ENCODE measurements at regions of chr5 and their contacts with region 1.

Region 1: GRCh38 chr5:141564216-141564692 is 54.5 kb downstream of the DIAPH1 start:
- DNase-seq: peak; percentile 97
- ATAC-seq: peak; percentile 71
- H3K4me3 ChIP-seq: no peak overlapping the region
- H3K27ac ChIP-seq: no peak overlapping the region
- H3K4me1 ChIP-seq: peaks cover 4% of the 10 kb centered on the region; the same call in 1 of the 2 replicates
- H3K27me3 ChIP-seq: no peaks in the 10 kb centered on the region
- CTCF ChIP-seq: peak; percentile 99
- POLR2A ChIP-seq: no peak
- RAD21 ChIP-seq: peak; percentile 75

Region 2: GRCh38 chr5:141172378-141173204 is 391.7 kb before region 1 on chr5 and contains the start of gene PCDHB7:
- CTCF ChIA-PET with region 1: no interaction called
- POLR2A ChIA-PET with region 1: no interaction called
- dilution Hi-C with region 1: no loop called
- in situ Hi-C with region 1: no loop called
- intact Hi-C with region 1: loop called (anchors 1 kb)
- DNase-seq: peak; percentile 26
- ATAC-seq: peak; percentile 62
- H3K4me3 ChIP-seq: peak within 1 kb of the TSS; percentile 43
- H3K27ac ChIP-seq: no peak within 1 kb of the TSS
- H3K4me1 ChIP-seq: no peaks in the 10 kb centered on the region
- H3K27me3 ChIP-seq: no peaks in the 10 kb centered on the region
- CTCF ChIP-seq: peak; percentile 50
- POLR2A ChIP-seq: no peak
- RAD21 ChIP-seq: peak; percentile 42; the same call in 1 of the 2 replicates
- total RNA-seq, gene PCDHB7: 0.18 and 0.28 TPM in 2 replicates

Region 3: GRCh38 chr5:141199359-141200235 is 364.7 kb before region 1 on chr5 and contains the start of gene PCDHB11:
- CTCF ChIA-PET with region 1: no interaction called
- POLR2A ChIA-PET with region 1: no interaction called
- dilution Hi-C with region 1: no loop called
- in situ Hi-C with region 1: no loop called
- intact Hi-C with region 1: no loop called
- DNase-seq: no peak
- ATAC-seq: no peak
- H3K4me3 ChIP-seq: peak within 1 kb of the TSS; percentile 25; the same call in 1 of the 2 replicates
- H3K27ac ChIP-seq: no peak within 1 kb of the TSS
- H3K4me1 ChIP-seq: no peaks in the 10 kb centered on the region
- H3K27me3 ChIP-seq: no peaks in the 10 kb centered on the region
- CTCF ChIP-seq: no peak
- POLR2A ChIP-seq: no peak
- RAD21 ChIP-seq: no peak
- total RNA-seq, gene PCDHB11: under 0.01 TPM in 2 replicates

Region 4: GRCh38 chr5:141234109-141234667 is 330.1 kb before region 1 on chr5:
- CTCF ChIA-PET with region 1: interaction called, 3 read pairs
- POLR2A ChIA-PET with region 1: no interaction called
- dilution Hi-C with region 1: no loop called
- in situ Hi-C with region 1: loop called (anchors 10 kb)
- intact Hi-C with region 1: no loop called
- DNase-seq: peak; percentile 3
- ATAC-seq: no peak
- H3K4me3 ChIP-seq: peak overlapping the region; percentile 53
- H3K27ac ChIP-seq: no peak overlapping the region
- H3K4me1 ChIP-seq: no peaks in the 10 kb centered on the region
- H3K27me3 ChIP-seq: no peaks in the 10 kb centered on the region
- CTCF ChIP-seq: peak; percentile 36; the same call in 1 of the 2 replicates
- POLR2A ChIP-seq: no peak
- RAD21 ChIP-seq: peak; percentile 25; the same call in 1 of the 2 replicates

Region 5: DNA sequence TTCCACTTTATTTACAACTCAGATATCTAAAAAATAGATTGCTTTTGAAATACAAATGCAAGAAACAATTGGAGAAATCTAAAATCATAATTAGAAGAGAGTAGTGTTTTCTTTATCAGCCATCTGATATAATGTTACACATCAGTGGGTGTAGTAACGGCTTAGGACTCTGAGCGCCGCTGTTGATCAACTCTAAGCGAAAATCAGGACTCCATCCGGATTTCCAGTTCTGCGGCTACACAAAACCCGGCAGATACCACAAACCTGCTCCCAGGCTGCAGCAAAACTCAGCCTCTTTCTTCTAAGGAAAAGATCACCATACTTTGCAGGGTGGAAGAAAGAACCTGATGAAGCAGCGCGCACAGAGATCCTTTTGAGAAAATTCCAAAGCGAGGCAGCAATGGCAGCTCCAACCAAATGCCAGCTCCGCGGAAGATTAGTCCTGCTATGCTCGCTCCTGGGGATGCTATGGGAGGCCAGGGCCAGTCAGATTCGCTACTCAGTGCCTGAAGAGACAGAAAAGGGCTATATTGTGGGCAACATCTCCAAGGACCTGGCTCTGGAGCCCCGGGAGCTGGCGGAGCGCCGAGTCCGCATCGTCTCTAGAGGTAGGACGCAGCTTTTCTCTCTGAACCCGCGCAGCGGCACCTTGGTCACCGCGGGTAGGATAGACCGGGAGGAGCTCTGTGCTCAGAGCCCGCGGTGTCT is 161.5 kb before region 1 on chr5 and contains the start of gene PCDHGA9:
- CTCF ChIA-PET with region 1: interaction called, 11 read pairs
- POLR2A ChIA-PET with region 1: interaction called, 4 read pairs
- dilution Hi-C with region 1: no loop called
- in situ Hi-C with region 1: no loop called
- intact Hi-C with region 1: no loop called
- DNase-seq: peak; percentile 40
- ATAC-seq: no peak
- H3K4me3 ChIP-seq: peak within 1 kb of the TSS; percentile 24
- H3K27ac ChIP-seq: no peak within 1 kb of the TSS
- H3K4me1 ChIP-seq: no peaks in the 10 kb centered on the region
- H3K27me3 ChIP-seq: no peaks in the 10 kb centered on the region
- CTCF ChIP-seq: peak; percentile 43
- POLR2A ChIP-seq: no peak
- RAD21 ChIP-seq: peak; percentile 36
- total RNA-seq, gene PCDHGA9: 3.9 and 4.5 TPM in 2 replicates

Region 6: DNA sequence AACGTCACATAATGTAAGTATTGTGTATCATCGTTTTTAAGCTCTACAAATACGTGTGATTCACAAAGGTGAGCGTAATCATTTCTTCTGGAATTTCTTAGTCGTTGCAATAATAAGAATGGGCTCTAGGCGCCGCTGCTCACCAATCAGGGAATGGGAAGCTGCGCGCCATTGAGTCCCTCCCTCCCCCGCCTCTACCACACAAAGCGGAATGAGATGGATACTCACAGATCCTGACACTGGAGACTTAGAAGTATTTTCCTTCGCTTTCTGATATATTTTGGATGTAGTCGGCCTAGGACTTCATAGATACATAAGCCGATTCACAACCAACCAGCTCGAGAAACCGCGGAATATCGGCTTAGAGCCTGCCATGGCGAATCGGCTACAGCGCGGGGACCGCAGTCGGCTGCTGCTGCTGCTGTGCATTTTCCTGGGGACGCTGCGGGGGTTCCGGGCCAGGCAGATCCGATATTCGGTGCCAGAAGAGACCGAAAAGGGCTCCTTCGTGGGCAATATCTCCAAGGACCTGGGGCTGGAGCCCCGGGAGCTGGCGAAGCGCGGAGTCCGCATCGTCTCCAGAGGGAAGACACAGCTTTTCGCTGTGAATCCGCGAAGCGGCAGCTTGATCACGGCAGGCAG is 143.3 kb before region 1 on chr5 and contains the start of gene PCDHGA11:
- CTCF ChIA-PET with region 1: interaction called, 34 read pairs
- POLR2A ChIA-PET with region 1: no interaction called
- dilution Hi-C with region 1: no loop called
- in situ Hi-C with region 1: loop called (anchors 5 kb)
- intact Hi-C with region 1: loop called (anchors 1 kb)
- DNase-seq: peak; percentile 63
- ATAC-seq: peak; percentile 57
- H3K4me3 ChIP-seq: peak within 1 kb of the TSS; percentile 54
- H3K27ac ChIP-seq: peak within 1 kb of the TSS; percentile 26; the same call in 1 of the 2 replicates
- H3K4me1 ChIP-seq: no peaks in the 10 kb centered on the region
- H3K27me3 ChIP-seq: no peaks in the 10 kb centered on the region
- CTCF ChIP-seq: peak; percentile 64
- POLR2A ChIP-seq: no peak
- RAD21 ChIP-seq: peak; percentile 70
- total RNA-seq, gene PCDHGA11: 5.4 and 5.8 TPM in 2 replicates

Region 7: DNA sequence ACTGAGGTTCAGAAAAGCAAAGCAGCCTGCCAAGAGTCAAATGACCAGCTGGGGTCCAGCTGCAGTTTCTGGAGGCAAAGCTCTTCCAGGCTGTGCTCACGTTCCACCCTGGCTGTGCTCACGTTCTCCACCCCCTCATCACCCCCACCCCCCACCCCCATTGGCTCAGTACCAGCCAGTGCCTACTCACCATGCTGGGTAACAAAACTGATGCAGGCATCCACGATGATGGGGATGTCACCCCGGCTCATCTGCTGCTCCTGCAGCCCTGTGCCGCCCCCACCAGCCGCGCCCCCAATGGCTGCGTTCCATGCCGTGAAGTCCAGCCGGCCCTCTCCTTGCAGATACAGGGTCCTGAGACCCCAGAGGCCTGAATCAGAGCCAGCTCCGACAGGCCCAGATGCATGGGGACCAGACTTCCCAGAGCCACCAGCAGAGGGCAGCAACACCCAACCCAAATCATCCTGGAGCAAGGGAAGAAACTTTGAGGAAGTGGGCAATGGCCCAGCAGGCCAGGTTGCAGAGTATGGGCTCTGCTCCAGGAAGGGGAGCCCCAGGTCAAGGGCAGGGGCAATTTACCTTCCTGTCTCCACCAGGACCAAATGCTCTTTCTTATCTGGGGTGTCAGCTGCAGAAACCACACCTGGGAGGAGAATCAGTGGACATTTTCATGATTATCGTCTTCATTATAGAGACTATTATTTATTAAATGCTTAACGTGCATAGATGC is 100.6 kb after region 1 on chr5:
- CTCF ChIA-PET with region 1: no interaction called
- POLR2A ChIA-PET with region 1: no interaction called
- dilution Hi-C with region 1: no loop called
- in situ Hi-C with region 1: no loop called
- intact Hi-C with region 1: no loop called
- DNase-seq: peak; percentile 58
- ATAC-seq: peak; percentile 93
- H3K4me3 ChIP-seq: no peak overlapping the region
- H3K27ac ChIP-seq: no peak overlapping the region
- H3K4me1 ChIP-seq: no peaks in the 10 kb centered on the region
- H3K27me3 ChIP-seq: no peaks in the 10 kb centered on the region
- CTCF ChIP-seq: peak; percentile 88
- POLR2A ChIP-seq: no peak
- RAD21 ChIP-seq: peak; percentile 83

Region 8: DNA sequence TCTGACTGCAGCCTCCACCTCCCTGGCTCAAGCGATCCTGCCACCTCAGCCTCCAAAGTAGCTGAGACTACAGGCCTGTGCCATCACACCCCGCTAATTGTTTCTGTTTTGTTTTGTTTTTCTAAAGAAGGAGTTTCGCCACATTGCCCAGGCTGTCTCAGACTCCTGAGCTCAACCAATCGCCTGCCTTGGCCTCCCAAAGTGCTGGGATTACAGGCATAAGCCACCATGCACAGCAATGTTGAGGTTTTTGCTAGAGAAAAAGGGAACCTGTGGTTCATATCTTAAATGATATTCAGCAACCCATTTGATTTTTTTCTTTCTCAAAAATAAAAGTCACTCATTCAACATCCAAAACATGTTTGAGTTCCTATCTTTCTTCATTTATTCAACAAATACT is 339.0 kb after region 1 on chr5:
- CTCF ChIA-PET with region 1: no interaction called
- POLR2A ChIA-PET with region 1: no interaction called
- dilution Hi-C with region 1: no loop called
- in situ Hi-C with region 1: no loop called
- intact Hi-C with region 1: no loop called
- DNase-seq: no peak
- ATAC-seq: no peak
- H3K4me3 ChIP-seq: no peak overlapping the region
- H3K27ac ChIP-seq: no peak overlapping the region
- H3K4me1 ChIP-seq: no peaks in the 10 kb centered on the region
- H3K27me3 ChIP-seq: peaks cover 29% of the 10 kb centered on the region
- CTCF ChIP-seq: no peak
- POLR2A ChIP-seq: no peak
- RAD21 ChIP-seq: no peak

Region 9: DNA sequence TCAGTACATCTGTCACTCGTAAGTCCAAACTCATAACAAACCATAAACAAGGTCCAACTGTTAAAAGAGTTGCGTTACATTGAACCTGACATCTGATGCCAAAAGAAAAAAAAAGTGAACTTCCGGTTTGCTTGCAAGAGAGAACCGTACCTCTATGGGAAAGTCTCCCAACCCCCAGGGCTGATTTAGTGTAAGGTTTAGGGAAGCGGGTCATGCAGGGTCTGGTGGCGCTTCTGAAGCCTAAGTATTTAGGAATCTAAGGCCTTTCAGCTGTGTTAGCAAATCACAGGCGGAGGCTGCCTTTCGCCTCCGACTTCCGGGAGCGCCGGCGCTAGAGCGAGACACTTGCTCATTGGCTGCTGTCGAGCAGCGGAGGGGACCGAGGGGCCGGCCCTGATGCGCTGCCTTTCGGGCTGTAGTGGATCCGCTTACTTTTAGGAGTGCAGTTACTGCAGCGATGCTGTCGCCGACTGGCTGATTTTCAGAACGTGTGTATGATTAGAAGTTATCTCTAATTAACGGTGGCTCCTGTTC is 460.6 kb after region 1 on chr5:
- CTCF ChIA-PET with region 1: no interaction called
- POLR2A ChIA-PET with region 1: no interaction called
- dilution Hi-C with region 1: no loop called
- in situ Hi-C with region 1: no loop called
- intact Hi-C with region 1: no loop called
- DNase-seq: peak; percentile 80
- ATAC-seq: peak; percentile 100
- H3K4me3 ChIP-seq: peak overlapping the region; percentile 71
- H3K27ac ChIP-seq: peak overlapping the region; percentile 99
- H3K4me1 ChIP-seq: no peaks in the 10 kb centered on the region
- H3K27me3 ChIP-seq: peaks cover 5% of the 10 kb centered on the region
- CTCF ChIP-seq: no peak
- POLR2A ChIP-seq: no peak
- RAD21 ChIP-seq: no peak

Measured in IMR-90 (cell line).